Thyroid gland (tissue), 4 donors: ENCODE measurements at regions of chr3 and their contacts with region 1.

Region 1: DNA sequence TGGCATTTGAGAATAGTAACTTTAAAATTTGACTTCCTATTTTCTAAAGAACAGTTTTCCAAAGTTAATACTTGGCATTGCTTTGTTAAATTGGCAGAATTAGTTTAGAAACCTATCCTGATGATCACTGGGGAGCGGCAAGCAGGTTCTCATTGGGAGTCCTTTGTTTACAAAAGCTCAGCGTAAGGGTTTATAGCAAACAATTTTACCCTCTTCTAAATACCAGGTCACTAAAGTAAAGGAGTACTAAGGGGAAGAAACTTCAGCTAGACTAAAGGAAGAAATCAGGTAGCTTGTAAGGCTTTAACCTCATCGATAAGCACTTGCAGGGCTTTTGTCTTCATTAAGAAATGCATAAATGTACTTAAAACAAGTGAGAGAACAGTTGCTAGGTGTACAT is 18.2 kb downstream of the TSC22D2 start:
- DNase-seq: no peak
- H3K4me3 ChIP-seq: no peak overlapping the region
- H3K27ac ChIP-seq: no peak overlapping the region
- H3K4me1 ChIP-seq: peaks cover 19 to 32% of the 10 kb centered on the region in 2 donors
- H3K27me3 ChIP-seq: no peaks in the 10 kb centered on the region
- CTCF ChIP-seq: no peak
- POLR2A ChIP-seq: no peak

Region 2: DNA sequence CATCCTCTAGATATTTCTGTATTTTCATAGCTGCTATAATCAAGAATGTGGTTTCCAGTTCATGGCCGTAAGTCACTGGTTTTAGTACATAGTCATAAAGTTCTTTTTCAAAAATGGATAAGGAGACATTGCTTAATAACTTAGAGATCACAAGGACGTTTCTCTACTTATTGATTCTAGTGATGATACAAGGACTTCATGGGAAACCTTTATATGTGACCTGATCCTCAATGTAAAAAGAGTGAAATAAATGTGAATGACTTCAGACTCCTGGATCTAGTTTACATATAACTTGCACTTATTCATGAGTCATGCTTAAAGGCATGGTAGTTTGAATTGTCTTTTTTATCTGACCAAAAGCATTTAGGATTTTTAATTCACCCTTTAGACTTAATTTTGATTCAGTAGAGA is 17.0 kb after region 1 on chr3:
- intact Hi-C with region 1: loop called (anchors 2 kb)
- DNase-seq: no peak
- H3K4me3 ChIP-seq: no peak overlapping the region
- H3K27ac ChIP-seq: no peak overlapping the region
- H3K4me1 ChIP-seq: peaks cover 5 to 8% of the 10 kb centered on the region in 2 donors
- H3K27me3 ChIP-seq: no peaks in the 10 kb centered on the region
- CTCF ChIP-seq: no peak
- POLR2A ChIP-seq: no peak